ENCODE measurements at regions of chr4 and their contacts with region 1.

Region 1: GRCh38 chr4:168917138-168917779 is 92.8 kb downstream of the CBR4 start:
- DNase-seq: no peak
- H3K4me3 ChIP-seq: no peak overlapping the region
- H3K27ac ChIP-seq: peak overlapping the region in 1 of 5 donors; percentile 10
- H3K4me1 ChIP-seq: peaks cover 0 to 8% of the 10 kb centered on the region in 2 donors
- H3K27me3 ChIP-seq: no peaks in the 10 kb centered on the region
- CTCF ChIP-seq: peak; percentile 27 to 71 (median 49)
- POLR2A ChIP-seq: no peak

Region 2: DNA sequence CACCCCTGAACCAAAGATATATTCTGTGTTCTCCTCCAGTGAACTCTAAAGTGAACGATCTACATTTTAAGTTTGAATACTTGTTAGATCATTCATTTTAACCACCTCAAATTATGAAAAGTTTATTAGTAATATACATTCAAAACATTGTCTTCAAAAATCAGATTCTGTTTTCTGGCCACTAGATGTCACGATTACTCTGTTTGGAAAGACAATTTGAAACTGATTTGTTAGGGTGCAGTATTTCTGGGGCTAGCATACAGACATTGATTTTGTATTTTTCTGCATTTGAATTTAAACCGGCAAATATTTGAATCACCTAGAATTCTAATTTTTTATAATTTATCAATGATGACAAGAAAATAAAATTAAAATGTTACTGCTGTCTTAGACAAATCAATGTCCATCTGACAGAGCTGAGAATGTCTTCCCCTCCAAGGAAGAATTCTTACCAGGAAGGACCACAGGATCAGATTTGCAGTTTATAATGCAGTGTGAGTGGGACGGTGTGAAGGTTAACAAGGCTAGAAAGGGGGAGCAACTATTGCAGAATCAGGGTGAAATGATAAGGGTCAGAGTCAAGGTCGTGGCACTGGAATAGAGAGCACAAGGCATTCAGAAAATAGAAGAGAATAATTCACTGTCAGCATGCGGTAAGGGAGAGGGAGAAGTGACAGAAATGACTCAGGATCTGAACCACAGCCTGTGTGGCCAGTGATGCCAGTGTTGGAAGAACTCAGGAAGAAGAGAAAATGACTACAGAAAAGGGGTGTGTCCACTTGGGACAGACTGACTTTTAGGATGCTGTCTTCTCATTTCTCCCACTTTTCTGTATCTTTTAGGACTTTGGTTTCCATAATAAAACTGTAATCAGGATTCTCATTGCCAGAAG is 733.3 kb before region 1 on chr4:
- intact Hi-C with region 1: loop called in 1 of 2 experiments (anchors 10 kb)
- DNase-seq: peak in 4 of 7 donors; percentile 9 to 25 (median 13)
- H3K4me3 ChIP-seq: no peak overlapping the region
- H3K27ac ChIP-seq: no peak overlapping the region
- H3K4me1 ChIP-seq: peaks cover 0 to 5% of the 10 kb centered on the region in 2 donors
- H3K27me3 ChIP-seq: no peaks in the 10 kb centered on the region
- CTCF ChIP-seq: peak; percentile 34 to 73 (median 63)
- POLR2A ChIP-seq: no peak

Region 3: DNA sequence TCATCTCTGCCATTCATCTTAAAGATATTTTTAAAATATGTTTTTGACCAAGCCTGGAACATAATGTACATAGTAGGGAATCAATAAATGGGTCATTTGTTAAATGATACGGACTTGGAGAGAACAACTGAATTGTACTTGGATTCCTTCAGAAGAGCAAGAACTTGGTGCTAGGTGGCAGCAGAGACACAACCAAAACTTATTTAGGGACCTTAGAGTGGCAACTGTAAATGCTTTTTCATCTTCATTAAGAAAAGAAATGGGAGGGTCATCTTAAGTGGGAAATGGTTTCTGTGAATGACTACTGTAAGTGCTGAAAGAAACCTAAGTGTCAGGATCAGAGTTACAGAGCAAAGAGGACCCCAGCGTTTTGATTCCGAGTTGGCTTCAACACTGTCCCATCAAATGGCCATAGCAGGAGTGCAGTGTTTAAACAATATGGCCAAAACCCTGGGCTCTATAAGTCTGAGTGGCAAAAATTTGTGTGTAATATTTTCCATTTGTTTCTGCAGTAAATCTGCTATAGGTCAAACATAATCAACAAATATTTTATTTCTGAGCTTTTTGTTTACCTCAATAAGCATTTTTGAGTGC is 206.8 kb before region 1 on chr4:
- intact Hi-C with region 1: loop called in 1 of 2 experiments (anchors 10 kb)
- DNase-seq: peak; percentile 22 to 74 (median 29)
- H3K4me3 ChIP-seq: no peak overlapping the region
- H3K27ac ChIP-seq: no peak overlapping the region
- H3K4me1 ChIP-seq: no peaks in the 10 kb centered on the region
- H3K27me3 ChIP-seq: no peaks in the 10 kb centered on the region
- CTCF ChIP-seq: peak in 5 of 6 experiments; percentile 39 to 71 (median 62)
- POLR2A ChIP-seq: no peak

Region 4: GRCh38 chr4:168831919-168832762 is 85.1 kb before region 1 on chr4:
- intact Hi-C with region 1: loop called in 1 of 2 experiments (anchors 10 kb)
- DNase-seq: peak; percentile 70 to 89 (median 83)
- H3K4me3 ChIP-seq: peak overlapping the region; percentile 47 to 91 (median 72)
- H3K27ac ChIP-seq: peak overlapping the region; percentile 17 to 95 (median 81)
- H3K4me1 ChIP-seq: peaks cover 4 to 23% of the 10 kb centered on the region in 2 donors
- H3K27me3 ChIP-seq: no peaks in the 10 kb centered on the region
- CTCF ChIP-seq: no peak
- POLR2A ChIP-seq: peak; percentile 77 to 91

Region 5: GRCh38 chr4:169225058-169225751 is 307.9 kb after region 1 on chr4:
- intact Hi-C with region 1: no loop called
- DNase-seq: no peak
- H3K4me3 ChIP-seq: no peak overlapping the region
- H3K27ac ChIP-seq: peak overlapping the region in 1 of 5 donors; percentile 30
- H3K4me1 ChIP-seq: peaks cover 0 to 15% of the 10 kb centered on the region in 2 donors
- H3K27me3 ChIP-seq: no peaks in the 10 kb centered on the region
- CTCF ChIP-seq: no peak
- POLR2A ChIP-seq: no peak

Region 6: DNA sequence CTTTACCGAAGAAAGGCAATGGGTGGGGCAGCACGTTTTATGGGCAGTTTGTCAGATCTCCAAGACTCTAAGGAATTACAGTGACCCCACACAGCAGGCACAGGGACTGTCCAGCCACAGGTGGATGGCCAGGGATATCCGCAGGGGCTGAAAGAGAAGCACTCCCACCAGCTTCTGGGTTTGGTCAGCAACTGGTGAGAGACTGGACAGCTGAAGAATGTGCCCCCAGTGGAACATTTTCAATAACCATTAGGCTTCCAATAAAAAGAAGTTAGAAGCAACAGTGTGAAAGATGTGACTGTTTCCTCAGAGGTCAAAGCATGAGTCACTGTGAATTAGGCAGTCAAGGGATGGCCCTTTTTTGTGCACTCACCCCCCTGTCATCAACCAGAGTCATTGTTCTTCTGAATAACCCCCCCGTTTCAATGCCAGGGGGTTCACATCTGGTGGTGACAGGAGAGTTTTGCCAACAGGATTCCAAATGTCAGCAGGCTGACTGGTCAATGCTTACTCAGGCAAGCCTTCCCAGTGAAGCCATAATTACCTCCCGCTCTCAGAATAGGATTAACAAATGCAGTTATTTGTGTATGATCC is 428.0 kb after region 1 on chr4:
- intact Hi-C with region 1: no loop called
- DNase-seq: peak in 1 of 7 donors; percentile 23
- H3K4me3 ChIP-seq: no peak overlapping the region
- H3K27ac ChIP-seq: no peak overlapping the region
- H3K4me1 ChIP-seq: no peaks in the 10 kb centered on the region
- H3K27me3 ChIP-seq: no peaks in the 10 kb centered on the region
- CTCF ChIP-seq: no peak
- POLR2A ChIP-seq: no peak

Measured in adrenal gland (tissue), 19 donors.